ENCODE measurements at regions of chr11 and their contacts with region 1.

Region 1: GRCh38 chr11:65888163-65888814 is at the start of gene FIBP:
- DNase-seq: peak; percentile 87 to 98
- H3K4me3 ChIP-seq: peak within 1 kb of the TSS; percentile 73 to 84 (median 79)
- H3K27ac ChIP-seq: peak within 1 kb of the TSS; percentile 75
- H3K4me1 ChIP-seq: peaks cover 0 to 27% (median 12%) of the 10 kb centered on the region in 4 experiments; a peak in 5 of 7 replicates
- H3K27me3 ChIP-seq: peaks cover 0 to 14% (median 8%) of the 10 kb centered on the region in 4 experiments; a peak in 6 of 7 replicates
- CTCF ChIP-seq: peak in 2 of 3 experiments; percentile 80 to 84; a peak in 3 of 4 replicates
- EP300 ChIP-seq: no peak; a peak in 1 of 3 replicates
- POLR2A ChIP-seq: peak in 1 of 2 experiments; percentile 93; a peak in 2 of 3 replicates
- RAD21 ChIP-seq: peak; percentile 42 to 64
- total RNA-seq, gene FIBP: 74.3 and 79.9 TPM in 2 replicates

Region 2: DNA sequence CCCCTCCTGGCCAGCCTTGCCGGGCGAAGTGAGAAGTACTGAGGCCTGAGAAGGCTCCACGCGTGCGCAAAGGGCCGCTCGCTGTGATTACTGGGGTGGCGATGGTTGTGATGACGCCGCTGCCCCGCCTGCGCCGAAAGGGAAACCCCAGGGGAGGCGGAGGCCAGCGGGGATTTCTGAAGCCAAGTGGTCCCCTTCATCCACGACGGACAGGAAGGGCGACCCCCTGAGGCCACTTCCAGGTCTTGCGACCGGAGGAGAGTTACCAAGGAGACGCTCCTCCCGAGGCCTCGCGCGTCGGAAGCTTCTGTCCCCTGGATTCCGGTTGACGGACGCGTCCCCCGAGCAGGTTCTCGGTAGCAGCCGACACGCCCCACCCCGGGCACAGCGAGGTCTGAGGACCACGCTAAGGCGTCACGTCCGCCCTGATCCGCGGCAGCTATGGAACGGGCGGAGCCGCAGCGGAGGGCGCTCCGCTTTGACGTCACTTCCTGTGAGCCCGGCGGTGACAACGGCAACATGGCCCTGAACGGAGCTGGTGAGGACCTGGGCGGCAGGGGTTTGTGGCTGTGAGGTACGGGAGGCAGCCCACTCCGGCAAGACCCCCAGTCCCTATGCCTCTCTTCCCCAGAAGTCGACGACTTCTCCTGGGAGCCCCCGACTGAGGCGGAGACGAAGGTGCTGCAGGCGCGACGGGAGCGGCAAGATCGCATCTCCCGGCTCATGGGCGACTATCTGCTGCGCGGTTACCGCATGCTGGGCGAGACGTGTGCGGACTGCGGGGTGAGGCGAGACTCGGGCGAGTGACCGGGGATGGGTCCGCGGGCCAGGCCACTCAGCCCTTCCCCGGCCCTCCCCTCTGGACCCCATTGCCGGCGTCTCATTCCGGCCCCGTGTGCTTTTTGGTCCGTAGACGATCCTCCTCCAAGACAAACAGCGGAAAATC is 318.0 kb before region 1 on chr11 and contains the start of gene ZNRD2:
- CTCF ChIA-PET with region 1: no interaction called
- POLR2A ChIA-PET with region 1: no interaction called
- DNase-seq: peak; percentile 95 to 96
- H3K4me3 ChIP-seq: peak within 1 kb of the TSS; percentile 67 to 97 (median 92)
- H3K27ac ChIP-seq: peak within 1 kb of the TSS; percentile 33; the same call in 1 of the 2 replicates
- H3K4me1 ChIP-seq: peaks cover 10 to 29% (median 18%) of the 10 kb centered on the region in 4 experiments
- H3K27me3 ChIP-seq: peaks cover 0 to 11% (median 6%) of the 10 kb centered on the region in 4 experiments; a peak in 6 of 7 replicates
- CTCF ChIP-seq: peak in 2 of 3 experiments; percentile 66 to 84; a peak in 3 of 4 replicates
- EP300 ChIP-seq: no peak
- POLR2A ChIP-seq: peak in 1 of 2 experiments; percentile 80; a peak in 2 of 3 replicates
- RAD21 ChIP-seq: peak; percentile 44 to 50; a peak in 3 of 4 replicates
- total RNA-seq, gene ZNRD2: 53.4 and 56.1 TPM in 2 replicates

Region 3: GRCh38 chr11:65779851-65780577 is 108.3 kb before region 1 on chr11:
- CTCF ChIA-PET with region 1: interaction called, 38 read pairs
- POLR2A ChIA-PET with region 1: interaction called, 3 read pairs
- DNase-seq: peak; percentile 70 to 97
- H3K4me3 ChIP-seq: peak overlapping the region; percentile 43 to 89 (median 52)
- H3K27ac ChIP-seq: no peak overlapping the region
- H3K4me1 ChIP-seq: peaks cover 0 to 16% (median 3%) of the 10 kb centered on the region in 4 experiments; a peak in 6 of 7 replicates
- H3K27me3 ChIP-seq: peaks cover under 1 to 23% (median 18%) of the 10 kb centered on the region in 4 experiments
- CTCF ChIP-seq: peak in 2 of 3 experiments; percentile 99 to 100; a peak in 3 of 4 replicates
- EP300 ChIP-seq: peak in 1 of 2 experiments; percentile 67; a peak in 1 of 3 replicates
- POLR2A ChIP-seq: no peak
- RAD21 ChIP-seq: peak; percentile 79 to 88

Region 4: DNA sequence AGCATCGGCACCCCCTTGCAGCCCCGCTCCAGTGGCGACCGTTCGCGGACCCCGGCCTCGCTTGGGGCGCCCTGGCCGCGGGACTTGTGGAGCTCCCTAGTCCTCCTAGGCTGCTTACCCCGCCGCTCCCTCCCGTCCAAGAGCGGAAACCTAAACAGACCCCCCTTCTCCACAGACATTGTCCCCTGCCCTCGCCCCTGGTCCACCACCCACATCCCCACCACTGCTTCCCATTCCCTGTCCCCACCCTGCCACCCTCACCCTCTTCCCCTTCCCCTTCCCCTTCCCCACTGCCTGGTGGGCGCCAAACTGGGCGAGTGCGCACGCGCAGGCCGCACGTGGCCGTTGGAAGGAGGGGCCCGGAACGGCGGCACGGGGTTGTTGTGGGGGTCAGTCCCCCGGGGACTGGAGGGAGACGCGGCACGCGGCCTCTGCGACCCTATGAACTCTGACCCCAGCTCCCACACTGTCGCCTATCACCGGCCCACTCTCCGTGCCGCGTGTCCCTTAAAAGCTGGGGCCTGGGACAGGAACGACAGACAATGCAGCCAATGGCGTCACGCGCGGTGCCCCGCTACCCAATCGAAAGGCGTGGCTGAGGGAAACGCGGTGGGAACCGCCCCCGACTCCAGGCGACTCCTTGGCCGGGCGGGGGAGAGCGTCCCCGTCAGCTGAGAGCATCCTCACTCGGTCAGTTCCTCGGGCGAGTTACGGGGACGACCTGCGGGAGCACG is 54.8 kb before region 1 on chr11 and contains the start of gene SNX32:
- CTCF ChIA-PET with region 1: interaction called, 12 read pairs
- POLR2A ChIA-PET with region 1: interaction called, 1,071 read pairs
- DNase-seq: peak in 1 of 2 experiments; percentile 97
- H3K4me3 ChIP-seq: peak within 1 kb of the TSS; percentile 68 to 72 (median 70)
- H3K27ac ChIP-seq: peak within 1 kb of the TSS; percentile 70; the same call in 1 of the 2 replicates
- H3K4me1 ChIP-seq: peaks cover 0 to 8% (median 6%) of the 10 kb centered on the region in 4 experiments; a peak in 6 of 7 replicates
- H3K27me3 ChIP-seq: peaks cover 0 to 9% (median 6%) of the 10 kb centered on the region in 4 experiments; a peak in 4 of 7 replicates
- CTCF ChIP-seq: no peak
- EP300 ChIP-seq: no peak
- POLR2A ChIP-seq: peak in 1 of 2 experiments; percentile 41; a peak in 1 of 3 replicates
- RAD21 ChIP-seq: no peak
- total RNA-seq, gene SNX32: 1.1 and 2.2 TPM in 2 replicates

Region 5: GRCh38 chr11:65873318-65874156 is 14.8 kb before region 1 on chr11:
- CTCF ChIA-PET with region 1: interaction called, 210 read pairs
- POLR2A ChIA-PET with region 1: interaction called, 1,071 read pairs
- DNase-seq: peak; percentile 84 to 100
- H3K4me3 ChIP-seq: peak overlapping the region; percentile 49 to 77 (median 68)
- H3K27ac ChIP-seq: no peak overlapping the region
- H3K4me1 ChIP-seq: peaks cover 0 to 8% (median under 1%) of the 10 kb centered on the region in 4 experiments; a peak in 4 of 7 replicates
- H3K27me3 ChIP-seq: peaks cover 0 to 35% (median 14%) of the 10 kb centered on the region in 4 experiments; a peak in 4 of 7 replicates
- CTCF ChIP-seq: no peak
- EP300 ChIP-seq: no peak
- POLR2A ChIP-seq: peak in 1 of 2 experiments; percentile 30; a peak in 1 of 3 replicates
- RAD21 ChIP-seq: no peak

Region 6: DNA sequence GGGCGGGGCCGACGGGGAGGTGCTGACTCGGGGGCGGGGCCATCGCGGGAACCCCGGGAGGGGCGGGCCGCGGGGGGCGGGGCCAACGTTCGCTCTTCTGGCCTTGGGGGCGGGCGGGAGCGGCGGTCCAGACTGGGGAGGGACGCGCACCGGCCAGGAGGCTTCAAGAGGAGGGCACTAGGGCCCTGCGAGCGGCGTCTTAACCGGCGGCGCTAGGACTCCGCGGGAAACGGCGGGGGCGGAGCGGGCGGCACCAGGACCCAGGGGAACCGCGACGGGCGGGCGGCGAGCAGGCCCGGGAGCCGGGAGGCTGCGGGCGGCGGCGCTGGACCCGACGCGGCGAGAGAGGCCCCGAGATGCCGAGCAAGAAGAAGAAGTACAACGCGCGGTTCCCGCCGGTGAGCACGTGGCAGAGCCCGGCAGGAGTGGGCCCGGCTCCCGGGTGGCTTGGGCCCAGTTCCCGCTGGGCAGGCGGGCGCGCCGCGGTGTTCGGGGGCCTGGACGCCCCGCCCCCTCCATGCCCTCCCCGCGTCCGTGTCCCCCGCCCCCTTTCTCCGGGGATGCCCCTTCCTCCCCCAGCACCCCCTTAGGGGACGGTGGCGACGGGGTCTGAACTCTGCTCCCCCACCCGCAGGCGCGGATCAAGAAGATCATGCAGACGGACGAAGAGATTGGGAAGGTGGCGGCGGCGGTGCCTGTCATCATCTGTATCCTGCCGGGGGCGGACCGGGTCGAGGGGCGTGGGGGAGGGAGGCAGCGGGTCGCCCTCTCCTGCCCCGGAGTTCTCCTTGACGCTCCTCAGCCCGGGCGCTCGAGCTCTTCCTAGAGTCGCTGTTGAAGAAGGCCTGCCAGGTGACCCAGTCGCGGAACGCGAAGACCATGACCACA is 31.1 kb after region 1 on chr11 and contains the start of gene DRAP1:
- CTCF ChIA-PET with region 1: interaction called, 212 read pairs
- POLR2A ChIA-PET with region 1: interaction called, 36 read pairs
- DNase-seq: peak; percentile 85 to 95
- H3K4me3 ChIP-seq: peak within 1 kb of the TSS; percentile 91 to 98 (median 94)
- H3K27ac ChIP-seq: peak within 1 kb of the TSS; percentile 80
- H3K4me1 ChIP-seq: peaks cover 0 to 22% (median 13%) of the 10 kb centered on the region in 4 experiments; a peak in 4 of 7 replicates
- H3K27me3 ChIP-seq: no peaks in the 10 kb centered on the region
- CTCF ChIP-seq: no peak
- EP300 ChIP-seq: peak in 1 of 2 experiments; percentile 71; a peak in 1 of 3 replicates
- POLR2A ChIP-seq: peak; percentile 46 to 58
- RAD21 ChIP-seq: peak in 1 of 2 experiments; percentile 29; a peak in 2 of 4 replicates
- total RNA-seq, gene DRAP1: 98.7 and 108 TPM in 2 replicates

Region 7: GRCh38 chr11:65945430-65945911 is 57.2 kb after region 1 on chr11 and contains the start of gene TSGA10IP:
- CTCF ChIA-PET with region 1: interaction called, 17 read pairs
- POLR2A ChIA-PET with region 1: interaction called, 12 read pairs
- DNase-seq: peak; percentile 33 to 73
- H3K4me3 ChIP-seq: peak within 1 kb of the TSS; percentile 3 to 54 (median 30); a peak in 7 of 8 replicates
- H3K27ac ChIP-seq: peak within 1 kb of the TSS; percentile 80
- H3K4me1 ChIP-seq: peaks cover 3 to 25% (median 15%) of the 10 kb centered on the region in 4 experiments
- H3K27me3 ChIP-seq: no peaks in the 10 kb centered on the region
- CTCF ChIP-seq: no peak
- EP300 ChIP-seq: peak in 1 of 2 experiments; percentile 81; a peak in 1 of 3 replicates
- POLR2A ChIP-seq: peak; percentile 28 to 59; a peak in 2 of 3 replicates
- RAD21 ChIP-seq: peak in 1 of 2 experiments; percentile 5; a peak in 1 of 4 replicates
- total RNA-seq, gene TSGA10IP: 1.3 and 1.9 TPM in 2 replicates

Region 8: DNA sequence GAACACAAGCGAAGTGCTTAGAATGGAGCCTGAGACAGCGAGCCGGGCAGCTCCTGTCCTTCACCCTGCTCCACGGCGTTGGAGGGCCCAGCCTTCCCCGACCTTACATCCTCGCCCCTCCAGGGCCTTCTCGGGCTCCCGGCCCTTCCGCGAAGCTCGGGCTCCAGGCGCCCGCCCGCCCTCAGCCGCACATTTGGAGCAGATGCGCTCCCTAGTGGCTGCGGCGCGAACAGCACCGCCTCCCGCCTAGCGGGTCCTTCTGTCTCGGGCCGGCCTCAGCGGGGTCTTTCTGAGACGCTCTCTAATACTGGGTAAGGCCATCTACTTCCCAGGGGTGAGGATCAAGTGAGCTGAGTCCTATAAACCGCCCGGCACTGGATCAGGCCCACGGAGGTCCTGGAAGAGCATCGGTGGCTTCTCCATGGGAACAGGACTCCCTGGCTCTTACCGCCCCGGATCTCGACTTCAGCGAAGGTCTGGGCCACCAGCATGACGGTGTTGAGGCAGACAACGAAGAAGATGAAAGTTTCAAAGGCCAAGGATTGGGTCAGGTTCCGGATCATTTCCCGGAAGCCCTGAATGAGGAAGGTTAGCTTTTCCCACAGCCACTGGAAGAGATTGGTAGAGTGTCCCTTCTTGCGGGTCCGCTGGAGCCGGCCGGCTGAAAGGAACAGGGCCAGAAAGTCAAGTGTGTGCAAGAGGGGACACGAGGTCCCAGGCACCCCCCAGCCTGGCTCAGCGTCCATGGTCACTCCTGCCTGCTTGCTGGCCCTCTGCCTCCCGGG is 134.3 kb after region 1 on chr11:
- CTCF ChIA-PET with region 1: interaction called, 11 read pairs
- POLR2A ChIA-PET with region 1: no interaction called
- DNase-seq: peak; percentile 49 to 99
- H3K4me3 ChIP-seq: peak overlapping the region in 1 of 4 experiments; percentile 10; a peak in 1 of 8 replicates
- H3K27ac ChIP-seq: no peak overlapping the region
- H3K4me1 ChIP-seq: peaks cover 0 to 3% (median 1%) of the 10 kb centered on the region in 4 experiments; a peak in 1 of 7 replicates
- H3K27me3 ChIP-seq: peaks cover 0 to 18% (median 5%) of the 10 kb centered on the region in 4 experiments; a peak in 4 of 7 replicates
- CTCF ChIP-seq: peak; percentile 86 to 96 (median 86)
- EP300 ChIP-seq: peak in 1 of 2 experiments; percentile 60; a peak in 1 of 3 replicates
- POLR2A ChIP-seq: no peak
- RAD21 ChIP-seq: peak; percentile 70 to 82

Measured in H1 (cell line).